ENCODE measurements at regions of chr12 and their contacts with region 1.

Region 1: DNA sequence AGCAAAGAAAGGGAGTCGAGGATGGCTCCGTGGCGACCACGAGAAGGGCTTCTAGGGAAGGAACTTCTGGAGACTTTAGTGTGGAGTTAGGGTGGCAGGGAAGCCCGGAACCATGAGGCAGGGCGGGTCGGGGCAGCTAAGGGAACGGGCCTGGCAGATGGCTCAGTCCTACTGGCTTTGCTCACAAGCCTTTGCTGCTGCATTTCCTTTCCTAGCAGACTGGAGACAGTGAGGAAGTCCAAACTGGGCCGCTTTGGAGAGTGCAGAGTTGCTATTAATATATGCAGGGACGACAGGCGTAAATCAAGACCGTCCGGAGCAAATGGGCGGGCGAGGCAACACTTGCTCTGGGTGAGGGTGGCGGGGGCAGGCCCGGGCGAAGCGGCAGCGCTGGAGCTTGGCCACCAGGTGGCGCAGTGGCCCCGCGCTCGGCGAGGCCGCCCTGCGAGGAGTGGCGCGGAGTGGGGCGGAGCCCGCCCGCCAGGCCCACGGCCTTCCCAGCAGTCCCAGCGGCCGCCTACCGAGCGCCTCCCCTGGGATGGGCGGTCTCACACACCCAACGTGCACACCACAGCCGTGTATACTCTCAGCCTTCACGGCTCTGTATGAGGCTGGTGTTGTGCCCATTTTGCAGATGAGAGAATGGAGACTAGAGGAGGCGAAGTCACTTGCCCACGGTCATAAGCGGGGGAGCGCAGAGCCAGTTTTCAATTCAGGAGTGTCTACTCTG is 24.4 kb upstream of the LRTM2 start:
- DNase-seq: peak; percentile 94
- H3K4me3 Mint-ChIP-seq: peak overlapping the region; percentile 81
- H3K27ac Mint-ChIP-seq: peak overlapping the region; percentile 83
- H3K4me1 Mint-ChIP-seq: peaks cover 15% of the 10 kb centered on the region
- H3K27me3 Mint-ChIP-seq: no peaks in the 10 kb centered on the region

Region 2: DNA sequence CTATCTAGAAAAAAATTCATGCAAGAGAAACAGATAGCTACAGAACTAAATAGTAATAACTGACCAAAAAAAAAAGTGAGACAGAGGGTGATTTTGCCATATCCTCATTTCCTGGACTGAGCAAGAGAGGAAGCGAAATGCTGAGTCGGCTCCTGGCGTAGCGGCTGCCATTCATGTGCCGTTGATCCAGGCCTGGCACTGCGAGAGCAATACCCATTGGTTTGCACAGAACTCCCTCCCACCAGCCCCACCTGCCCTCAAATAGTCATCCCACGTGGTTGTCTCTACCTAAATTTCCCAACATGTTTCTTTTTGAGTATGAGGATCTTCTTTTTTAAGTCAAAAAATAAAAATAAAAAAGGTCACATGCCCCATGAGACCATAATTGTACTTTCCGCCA is 176.4 kb before region 1 on chr12:
- CTCF ChIA-PET with region 1: no interaction called
- intact Hi-C with region 1: no loop called
- DNase-seq: peak; percentile 66
- H3K4me3 Mint-ChIP-seq: no peak overlapping the region
- H3K27ac Mint-ChIP-seq: no peak overlapping the region
- H3K4me1 Mint-ChIP-seq: peaks cover 19% of the 10 kb centered on the region
- H3K27me3 Mint-ChIP-seq: no peaks in the 10 kb centered on the region

Region 3: GRCh38 chr12:1634590-1635191 is 161.3 kb before region 1 on chr12:
- CTCF ChIA-PET with region 1: interaction called, 37 read pairs
- intact Hi-C with region 1: loop called (anchors 1 kb)
- DNase-seq: peak; percentile 76
- H3K4me3 Mint-ChIP-seq: no peak overlapping the region
- H3K27ac Mint-ChIP-seq: no peak overlapping the region
- H3K4me1 Mint-ChIP-seq: peaks cover 9% of the 10 kb centered on the region
- H3K27me3 Mint-ChIP-seq: peaks cover 32% of the 10 kb centered on the region

Region 4: GRCh38 chr12:1661553-1662335 is 134.2 kb before region 1 on chr12:
- CTCF ChIA-PET with region 1: interaction called, 255 read pairs
- intact Hi-C with region 1: no loop called
- DNase-seq: peak; percentile 88
- H3K4me3 Mint-ChIP-seq: peak overlapping the region; percentile 71
- H3K27ac Mint-ChIP-seq: peak overlapping the region; percentile 61
- H3K4me1 Mint-ChIP-seq: peaks cover 33% of the 10 kb centered on the region
- H3K27me3 Mint-ChIP-seq: no peaks in the 10 kb centered on the region

Region 5: GRCh38 chr12:1939801-1940607 is 144.1 kb after region 1 on chr12:
- CTCF ChIA-PET with region 1: interaction called, 94 read pairs
- intact Hi-C with region 1: loop called (anchors 1 kb)
- DNase-seq: peak; percentile 95
- H3K4me3 Mint-ChIP-seq: no peak overlapping the region
- H3K27ac Mint-ChIP-seq: no peak overlapping the region
- H3K4me1 Mint-ChIP-seq: no peaks in the 10 kb centered on the region
- H3K27me3 Mint-ChIP-seq: no peaks in the 10 kb centered on the region

Region 6: DNA sequence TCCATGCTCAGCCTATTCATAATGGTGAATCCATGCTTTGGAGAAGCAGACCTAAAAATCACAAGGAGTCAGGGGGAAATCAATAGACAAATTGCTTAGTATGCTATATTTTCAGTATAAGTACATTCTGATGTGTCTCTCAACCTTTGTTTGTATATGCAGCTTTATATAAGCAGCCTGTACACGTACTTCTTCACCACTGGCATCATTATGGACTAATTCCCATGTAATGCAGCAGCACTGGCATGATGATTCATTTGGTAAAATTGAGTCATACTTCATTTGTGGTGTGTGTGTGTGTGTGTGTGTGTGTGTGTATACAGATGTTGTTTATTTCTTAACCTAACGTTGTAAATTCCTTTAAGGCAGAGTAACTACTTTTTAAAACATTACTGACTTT is 197.4 kb after region 1 on chr12:
- CTCF ChIA-PET with region 1: no interaction called
- intact Hi-C with region 1: no loop called
- DNase-seq: no peak
- H3K4me3 Mint-ChIP-seq: no peak overlapping the region
- H3K27ac Mint-ChIP-seq: no peak overlapping the region
- H3K4me1 Mint-ChIP-seq: peaks cover 20% of the 10 kb centered on the region
- H3K27me3 Mint-ChIP-seq: no peaks in the 10 kb centered on the region

Region 7: DNA sequence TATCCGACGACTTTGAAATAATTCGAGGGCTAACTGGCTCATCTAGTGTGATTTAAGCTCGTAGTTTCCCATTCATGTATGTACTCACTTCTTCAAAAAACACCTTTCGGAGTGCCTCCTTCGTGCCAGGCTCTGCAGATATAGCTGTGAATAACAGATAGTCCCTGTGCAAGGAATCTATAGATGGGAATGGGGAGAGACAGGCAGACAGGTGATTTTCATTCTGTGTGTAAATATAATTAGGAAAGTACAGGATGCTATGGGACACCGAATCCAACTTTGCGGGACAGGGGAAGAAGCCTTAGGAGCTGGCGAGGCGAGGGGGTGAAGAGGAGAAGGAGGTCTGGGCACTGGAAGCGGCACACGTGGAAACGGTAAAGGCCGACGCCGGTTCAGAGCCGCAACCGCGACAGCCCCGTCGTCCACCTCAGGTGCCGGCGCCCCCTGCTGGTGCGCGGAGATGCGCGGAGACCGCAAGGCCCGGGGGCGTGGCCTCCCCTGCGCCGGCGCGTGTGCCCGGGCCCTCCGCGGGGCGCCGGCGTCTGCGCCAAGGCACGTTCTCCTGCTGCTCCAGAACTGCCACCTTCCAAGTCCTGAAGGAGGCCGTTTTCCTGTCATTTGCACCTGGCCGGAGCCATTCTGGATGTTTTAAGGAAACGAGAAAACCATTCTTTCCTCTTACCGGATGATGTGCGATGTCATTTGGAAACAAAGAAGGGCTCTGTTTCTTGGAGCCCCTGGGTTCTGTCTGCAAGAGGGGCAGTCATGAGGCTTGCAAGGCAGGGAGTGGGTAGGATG is 238.9 kb after region 1 on chr12:
- CTCF ChIA-PET with region 1: interaction called, 3 read pairs
- intact Hi-C with region 1: loop called (anchors 1 kb)
- DNase-seq: peak; percentile 88
- H3K4me3 Mint-ChIP-seq: peak overlapping the region; percentile 59
- H3K27ac Mint-ChIP-seq: no peak overlapping the region
- H3K4me1 Mint-ChIP-seq: peaks cover 10% of the 10 kb centered on the region
- H3K27me3 Mint-ChIP-seq: peaks cover 13% of the 10 kb centered on the region

Region 8: DNA sequence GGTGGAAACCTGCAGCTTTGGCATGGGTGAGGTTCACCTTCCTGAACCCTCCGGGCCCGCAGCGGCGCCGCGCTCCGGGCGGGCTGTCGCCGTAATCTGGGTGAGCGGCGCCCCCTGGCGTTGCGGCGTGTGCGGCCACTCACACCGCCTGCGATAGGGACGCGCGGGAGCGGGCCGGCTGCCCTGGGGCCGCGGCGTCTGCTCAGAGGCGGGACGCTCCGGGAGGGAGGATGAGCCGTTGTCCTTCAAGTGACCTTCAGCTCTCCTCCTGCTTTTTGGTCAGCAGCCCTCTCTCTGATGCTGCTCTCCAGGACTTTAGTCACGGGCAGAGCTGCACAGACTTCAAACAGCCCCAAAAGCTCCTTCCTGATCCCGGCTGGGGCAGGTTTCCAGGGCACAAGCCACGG is 787.1 kb after region 1 on chr12:
- CTCF ChIA-PET with region 1: no interaction called
- intact Hi-C with region 1: loop called (anchors 2 kb)
- DNase-seq: peak; percentile 62
- H3K4me3 Mint-ChIP-seq: no peak overlapping the region
- H3K27ac Mint-ChIP-seq: no peak overlapping the region
- H3K4me1 Mint-ChIP-seq: peaks cover 3% of the 10 kb centered on the region
- H3K27me3 Mint-ChIP-seq: peaks cover 31% of the 10 kb centered on the region

Measured in activated naive CD4-positive, alpha-beta T cell treated with anti-CD3 and anti-CD28 coated beads for 36 hours (primary cell).